ENCODE measurements at regions of chr4 and their contacts with region 1.

Region 1: GRCh38 chr4:4541661-4542570 is at the start of gene STX18:
- DNase-seq: peak; percentile 76 to 94 (median 84)
- ATAC-seq: peak; percentile 95
- H3K4me3 ChIP-seq: peak within 1 kb of the TSS; percentile 91
- H3K4me3 Mint-ChIP-seq: peak within 1 kb of the TSS; percentile 93 to 99 (median 98)
- H3K27ac ChIP-seq: peak within 1 kb of the TSS; percentile 77
- H3K27ac Mint-ChIP-seq: peak within 1 kb of the TSS; percentile 88 to 97 (median 95)
- H3K4me1 ChIP-seq: peaks cover 18 to 22% of the 10 kb centered on the region in 2 donors
- H3K4me1 Mint-ChIP-seq: peaks cover 34 to 76% (median 61%) of the 10 kb centered on the region in 7 donors
- H3K27me3 ChIP-seq: no peaks in the 10 kb centered on the region
- H3K27me3 Mint-ChIP-seq: no peaks in the 10 kb centered on the region
- total RNA-seq, gene STX18: 19.0 to 28.0 (median 22.7) TPM

Region 2: DNA sequence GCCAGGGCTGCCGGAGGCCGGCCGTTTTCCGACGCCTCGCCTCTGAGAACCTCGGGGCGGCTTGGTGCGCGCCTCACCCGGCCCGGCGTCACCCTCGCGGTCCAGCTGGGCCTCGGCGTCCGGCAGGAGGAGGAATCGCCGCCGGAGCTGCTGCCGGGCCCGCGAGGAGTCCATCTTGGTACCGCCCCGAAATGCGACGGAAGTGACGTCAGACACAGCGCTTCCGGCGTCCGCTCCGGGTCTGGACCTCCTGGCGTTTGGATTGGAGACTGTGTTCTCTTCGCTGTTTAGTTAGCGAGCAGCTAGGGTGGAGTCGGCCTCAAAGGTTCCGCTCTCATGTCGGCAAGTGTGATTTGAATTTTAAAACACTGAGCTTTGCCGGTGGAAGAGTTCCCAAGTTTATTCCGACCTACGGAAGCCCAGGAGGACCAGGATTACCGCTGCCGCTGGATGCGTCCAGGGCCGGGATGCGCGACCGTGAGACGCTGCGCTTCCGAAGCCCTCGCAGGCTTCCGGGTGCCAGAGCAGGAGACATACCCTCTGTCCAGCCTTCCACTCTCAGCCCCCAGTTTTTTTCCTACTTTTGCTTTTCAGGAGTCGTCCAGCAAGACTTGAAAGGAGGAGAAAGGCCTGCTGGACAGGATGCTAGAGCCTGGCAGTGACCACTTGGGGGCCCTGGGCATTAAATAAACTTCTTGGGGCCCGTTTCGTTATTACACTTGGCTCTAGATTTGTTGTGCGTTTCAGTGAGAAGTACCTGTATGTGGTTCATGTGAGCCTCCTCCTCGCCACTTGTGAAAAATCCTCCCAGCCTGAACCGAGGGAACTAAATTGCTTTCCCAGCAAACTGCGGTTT is 293.7 kb before region 1 on chr4 and contains the start of gene TMEM128:
- CTCF ChIA-PET with region 1: no interaction called
- POLR2A ChIA-PET with region 1: interaction called, 15 read pairs
- intact Hi-C with region 1: loop called (anchors 1 kb)
- DNase-seq: peak; percentile 83 to 92 (median 90)
- ATAC-seq: peak; percentile 98
- H3K4me3 ChIP-seq: peak within 1 kb of the TSS; percentile 89
- H3K4me3 Mint-ChIP-seq: peak within 1 kb of the TSS; percentile 91 to 98 (median 96)
- H3K27ac ChIP-seq: peak within 1 kb of the TSS; percentile 84
- H3K27ac Mint-ChIP-seq: peak within 1 kb of the TSS; percentile 96 to 99 (median 98)
- H3K4me1 ChIP-seq: peaks cover 8 to 22% of the 10 kb centered on the region in 2 donors
- H3K4me1 Mint-ChIP-seq: peaks cover 24 to 54% (median 41%) of the 10 kb centered on the region in 7 donors
- H3K27me3 ChIP-seq: no peaks in the 10 kb centered on the region
- H3K27me3 Mint-ChIP-seq: peaks cover 0 to 7% (median 0%) of the 10 kb centered on the region in 5 donors
- total RNA-seq, gene TMEM128: 10.0 to 22.8 (median 17.8) TPM

Region 3: GRCh38 chr4:4344915-4345527 is 196.9 kb before region 1 on chr4:
- CTCF ChIA-PET with region 1: no interaction called
- POLR2A ChIA-PET with region 1: no interaction called
- intact Hi-C with region 1: loop called in 1 of 2 experiments (anchors 1 kb)
- DNase-seq: no peak
- ATAC-seq: no peak
- H3K4me3 ChIP-seq: no peak overlapping the region
- H3K4me3 Mint-ChIP-seq: no peak overlapping the region
- H3K27ac ChIP-seq: no peak overlapping the region
- H3K27ac Mint-ChIP-seq: peak overlapping the region in 6 of 9 donors; percentile 8 to 70 (median 14)
- H3K4me1 ChIP-seq: peaks cover 5 to 13% of the 10 kb centered on the region in 2 donors
- H3K4me1 Mint-ChIP-seq: peaks cover 11 to 56% (median 29%) of the 10 kb centered on the region in 7 donors
- H3K27me3 ChIP-seq: no peaks in the 10 kb centered on the region
- H3K27me3 Mint-ChIP-seq: no peaks in the 10 kb centered on the region

Region 4: GRCh38 chr4:4470208-4470607 is 71.7 kb before region 1 on chr4:
- CTCF ChIA-PET with region 1: no interaction called
- POLR2A ChIA-PET with region 1: no interaction called
- intact Hi-C with region 1: no loop called
- DNase-seq: no peak
- ATAC-seq: no peak
- H3K4me3 ChIP-seq: no peak overlapping the region
- H3K4me3 Mint-ChIP-seq: no peak overlapping the region
- H3K27ac ChIP-seq: no peak overlapping the region
- H3K27ac Mint-ChIP-seq: no peak overlapping the region
- H3K4me1 ChIP-seq: no peaks in the 10 kb centered on the region
- H3K4me1 Mint-ChIP-seq: peaks cover 2 to 20% (median 13%) of the 10 kb centered on the region in 7 donors
- H3K27me3 ChIP-seq: no peaks in the 10 kb centered on the region
- H3K27me3 Mint-ChIP-seq: no peaks in the 10 kb centered on the region

Region 5: GRCh38 chr4:4502694-4503311 is 39.1 kb before region 1 on chr4:
- CTCF ChIA-PET with region 1: no interaction called
- POLR2A ChIA-PET with region 1: no interaction called
- intact Hi-C with region 1: loop called in 1 of 2 experiments (anchors 5 kb)
- DNase-seq: peak in 6 of 9 donors; percentile 12 to 34 (median 18)
- ATAC-seq: peak; percentile 73
- H3K4me3 ChIP-seq: peak overlapping the region; percentile 33
- H3K4me3 Mint-ChIP-seq: peak overlapping the region; percentile 54 to 79 (median 68)
- H3K27ac ChIP-seq: no peak overlapping the region
- H3K27ac Mint-ChIP-seq: peak overlapping the region in 7 of 9 donors; percentile 3 to 81 (median 18)
- H3K4me1 ChIP-seq: no peaks in the 10 kb centered on the region
- H3K4me1 Mint-ChIP-seq: peaks cover 2 to 27% (median 18%) of the 10 kb centered on the region in 7 donors
- H3K27me3 ChIP-seq: no peaks in the 10 kb centered on the region
- H3K27me3 Mint-ChIP-seq: no peaks in the 10 kb centered on the region

Region 6: GRCh38 chr4:4575273-4576211 is 33.6 kb after region 1 on chr4:
- CTCF ChIA-PET with region 1: no interaction called
- POLR2A ChIA-PET with region 1: no interaction called
- intact Hi-C with region 1: loop called in 1 of 2 experiments (anchors 1 kb)
- DNase-seq: peak; percentile 37 to 69 (median 60)
- ATAC-seq: peak; percentile 86
- H3K4me3 ChIP-seq: peak overlapping the region; percentile 68
- H3K4me3 Mint-ChIP-seq: peak overlapping the region; percentile 72 to 92 (median 84)
- H3K27ac ChIP-seq: peak overlapping the region; percentile 64
- H3K27ac Mint-ChIP-seq: peak overlapping the region in 7 of 9 donors; percentile 3 to 95 (median 60)
- H3K4me1 ChIP-seq: peaks cover 0 to 6% of the 10 kb centered on the region in 2 donors
- H3K4me1 Mint-ChIP-seq: peaks cover 10 to 22% (median 18%) of the 10 kb centered on the region in 7 donors
- H3K27me3 ChIP-seq: no peaks in the 10 kb centered on the region
- H3K27me3 Mint-ChIP-seq: peaks cover 0 to 10% (median 0%) of the 10 kb centered on the region in 5 donors

Measured in naive thymus-derived CD4-positive, alpha-beta T cell (primary cell).